ENCODE measurements at regions of chr1 and their contacts with region 1.

Region 1: GRCh38 chr1:44985747-44986359 is 542 bp downstream of the EIF2B3 start:
- DNase-seq: peak; percentile 23
- H3K4me3 ChIP-seq: peak overlapping the region; percentile 42 to 89 (median 67)
- H3K27ac ChIP-seq: peak overlapping the region; percentile 4
- H3K4me1 ChIP-seq: peaks cover 8% of the 10 kb centered on the region
- H3K27me3 ChIP-seq: no peaks in the 10 kb centered on the region
- CTCF ChIP-seq: no peak
- POLR2A ChIP-seq: no peak

Region 2: GRCh38 chr1:44835738-44836675 is 149.8 kb before region 1 on chr1:
- CTCF ChIA-PET with region 1: interaction called, 9 read pairs
- POLR2A ChIA-PET with region 1: no interaction called
- dilution Hi-C with region 1: no loop called
- intact Hi-C with region 1: loop called (anchors 2 kb)
- DNase-seq: peak; percentile 88
- H3K4me3 ChIP-seq: no peak overlapping the region
- H3K27ac ChIP-seq: no peak overlapping the region
- H3K4me1 ChIP-seq: no peaks in the 10 kb centered on the region
- H3K27me3 ChIP-seq: no peaks in the 10 kb centered on the region
- CTCF ChIP-seq: peak; percentile 85 to 93
- POLR2A ChIP-seq: no peak

Region 3: GRCh38 chr1:44947063-44947773 is 38.6 kb before region 1 on chr1:
- CTCF ChIA-PET with region 1: no interaction called
- POLR2A ChIA-PET with region 1: no interaction called
- dilution Hi-C with region 1: no loop called
- intact Hi-C with region 1: loop called (anchors 1 kb)
- DNase-seq: peak; percentile 92
- H3K4me3 ChIP-seq: no peak overlapping the region
- H3K27ac ChIP-seq: peak overlapping the region; percentile 48
- H3K4me1 ChIP-seq: peaks cover 20% of the 10 kb centered on the region
- H3K27me3 ChIP-seq: no peaks in the 10 kb centered on the region
- CTCF ChIP-seq: no peak
- POLR2A ChIP-seq: no peak

Region 4: DNA sequence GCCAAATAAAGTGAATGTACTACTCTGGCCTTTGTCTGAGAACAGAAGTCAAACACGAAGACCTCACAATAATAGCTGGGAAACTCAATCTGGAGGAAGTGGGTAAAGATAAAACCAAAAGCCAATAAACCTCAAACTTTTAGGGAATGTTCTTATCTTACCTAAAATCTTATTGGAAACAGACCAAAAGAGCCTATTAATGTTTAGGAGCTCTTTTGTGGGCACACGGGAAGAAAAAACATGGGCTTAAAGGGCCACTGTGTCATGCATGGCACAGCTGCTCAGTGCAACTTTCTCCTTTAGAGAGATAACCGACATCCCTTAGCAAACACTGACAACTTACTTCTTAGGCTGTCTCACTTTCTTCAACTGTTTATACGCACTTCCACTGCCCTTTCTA is 15.5 kb before region 1 on chr1:
- CTCF ChIA-PET with region 1: interaction called, 5 read pairs
- POLR2A ChIA-PET with region 1: interaction called, 3 read pairs
- dilution Hi-C with region 1: no loop called
- intact Hi-C with region 1: loop called (anchors 1 kb)
- DNase-seq: peak; percentile 80
- H3K4me3 ChIP-seq: no peak overlapping the region
- H3K27ac ChIP-seq: peak overlapping the region; percentile 56
- H3K4me1 ChIP-seq: peaks cover 35% of the 10 kb centered on the region
- H3K27me3 ChIP-seq: no peaks in the 10 kb centered on the region
- CTCF ChIP-seq: no peak
- POLR2A ChIP-seq: no peak

Region 5: DNA sequence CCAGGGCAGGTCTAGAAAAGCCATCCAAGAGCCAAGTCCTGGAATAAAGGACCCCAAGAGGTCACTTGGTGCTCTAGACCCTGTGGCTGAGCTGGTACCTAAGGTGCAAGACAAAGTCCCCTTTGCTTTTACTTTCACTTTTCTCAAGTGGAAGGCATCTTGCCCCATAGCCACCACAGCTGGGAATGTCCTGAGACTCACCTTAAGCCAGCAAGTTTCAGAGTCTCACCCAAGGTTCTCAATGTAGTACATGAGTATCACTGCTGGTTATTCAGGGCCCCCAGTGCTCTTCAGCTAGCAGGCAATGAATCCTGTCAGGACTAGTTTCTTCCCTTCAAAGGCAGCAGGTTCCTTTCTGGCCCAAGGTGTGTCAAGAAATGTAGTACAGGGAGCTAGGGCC is 93.7 kb after region 1 on chr1:
- CTCF ChIA-PET with region 1: no interaction called
- POLR2A ChIA-PET with region 1: no interaction called
- dilution Hi-C with region 1: no loop called
- intact Hi-C with region 1: no loop called
- DNase-seq: no peak
- H3K4me3 ChIP-seq: no peak overlapping the region
- H3K27ac ChIP-seq: no peak overlapping the region
- H3K4me1 ChIP-seq: no peaks in the 10 kb centered on the region
- H3K27me3 ChIP-seq: no peaks in the 10 kb centered on the region
- CTCF ChIP-seq: no peak
- POLR2A ChIP-seq: no peak

Region 6: DNA sequence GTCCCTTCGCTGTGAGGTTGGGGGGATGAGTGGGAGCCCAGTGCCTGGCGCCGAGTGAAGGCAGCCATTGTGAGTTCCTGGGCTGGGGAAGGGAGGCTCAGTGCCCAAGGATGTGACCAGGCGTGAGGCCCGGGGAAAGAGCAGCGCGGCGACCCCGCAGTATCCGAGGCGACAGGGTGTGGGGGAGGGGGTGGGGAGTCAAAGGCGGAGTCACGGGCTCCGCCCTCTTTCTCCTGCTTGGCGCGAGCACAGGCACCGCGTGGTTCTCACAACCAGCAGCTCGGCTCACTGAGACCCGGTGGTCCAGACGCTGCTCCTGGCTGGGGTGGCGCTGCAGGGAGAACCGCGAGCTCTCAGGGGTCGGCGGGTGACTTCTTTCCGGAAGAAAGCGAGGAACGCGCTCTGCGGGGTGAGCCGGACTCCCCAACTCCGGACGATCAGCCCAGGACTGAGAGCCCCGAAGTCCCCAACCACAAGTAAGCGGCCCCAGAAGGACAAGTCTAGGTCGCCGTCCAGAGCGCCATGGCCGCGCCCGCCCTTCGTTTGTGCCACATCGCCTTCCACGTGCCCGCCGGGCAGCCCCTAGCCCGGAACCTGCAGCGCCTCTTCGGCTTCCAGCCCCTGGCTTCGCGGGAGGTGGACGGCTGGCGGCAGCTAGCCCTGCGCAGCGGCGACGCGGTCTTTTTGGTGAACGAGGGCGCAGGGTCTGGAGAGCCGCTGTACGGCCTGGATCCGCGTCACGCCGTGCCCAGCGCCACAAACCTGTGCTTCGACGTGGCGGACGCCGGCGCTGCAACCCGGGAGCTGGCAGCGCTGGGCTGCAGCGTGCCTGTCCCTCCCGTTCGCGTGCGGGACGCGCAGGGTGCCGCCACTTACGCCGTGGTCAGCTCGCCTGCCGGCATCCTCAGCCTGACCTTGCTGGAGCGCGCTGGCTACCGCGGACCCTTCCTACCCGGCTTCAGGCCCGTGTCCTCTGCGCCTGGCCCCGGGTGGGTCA is 341.1 kb after region 1 on chr1 and contains the start of gene HPDL:
- CTCF ChIA-PET with region 1: no interaction called
- POLR2A ChIA-PET with region 1: no interaction called
- dilution Hi-C with region 1: no loop called
- intact Hi-C with region 1: no loop called
- DNase-seq: peak; percentile 53
- H3K4me3 ChIP-seq: peak within 1 kb of the TSS; percentile 12 to 48 (median 43)
- H3K27ac ChIP-seq: peak within 1 kb of the TSS; percentile 24
- H3K4me1 ChIP-seq: peaks cover 18% of the 10 kb centered on the region
- H3K27me3 ChIP-seq: no peaks in the 10 kb centered on the region
- CTCF ChIP-seq: no peak
- POLR2A ChIP-seq: peak; percentile 71
- total RNA-seq, gene HPDL: 5.6 and 5.9 TPM in 2 replicates

Measured in endothelial cell of umbilical vein (primary cell).